Sigmoid colon (tissue), 7 donors: ENCODE measurements at regions of chr1 and their contacts with region 1.

Region 1: GRCh38 chr1:96236156-96236739 is 485.3 kb upstream of the PTBP2 start:
- DNase-seq: no peak
- H3K4me3 ChIP-seq: no peak overlapping the region
- H3K27ac ChIP-seq: peak overlapping the region in 2 of 4 donors; percentile 24 to 38
- H3K4me1 ChIP-seq: peaks cover 0 to 21% (median 13%) of the 10 kb centered on the region in 4 donors
- H3K27me3 ChIP-seq: no peaks in the 10 kb centered on the region
- CTCF ChIP-seq: peak; percentile 37 to 61 (median 49)
- EP300 ChIP-seq: no peak
- POLR2A ChIP-seq: no peak

Region 2: DNA sequence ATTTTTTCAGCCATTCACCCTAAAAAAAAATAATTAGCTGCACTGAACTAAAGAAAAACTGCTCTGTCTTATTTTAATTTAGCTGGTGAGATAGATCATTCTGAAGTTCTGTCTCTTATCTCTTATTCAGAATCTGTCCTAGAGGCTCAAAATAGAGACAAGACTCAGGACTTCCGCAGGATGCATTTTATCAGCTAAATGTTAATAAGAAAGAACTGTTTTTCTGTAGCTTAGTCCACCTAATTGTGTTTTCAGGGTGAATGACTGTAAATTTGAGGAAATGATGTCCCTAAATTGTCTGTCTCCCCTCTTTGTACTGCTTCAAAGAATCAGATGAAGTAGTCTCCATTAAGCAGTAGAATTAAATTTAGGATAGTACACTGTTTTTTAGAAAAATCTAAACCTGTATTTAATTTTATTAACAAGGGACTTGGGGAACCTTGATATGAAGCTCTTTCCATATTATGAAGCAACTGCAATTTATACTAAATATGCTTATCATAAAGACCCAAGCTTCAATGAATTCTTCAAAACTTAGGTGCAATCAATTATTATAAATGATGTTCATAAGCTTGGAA is 330.3 kb before region 1 on chr1:
- intact Hi-C with region 1: no loop called
- DNase-seq: no peak
- H3K4me3 ChIP-seq: no peak overlapping the region
- H3K27ac ChIP-seq: no peak overlapping the region
- H3K4me1 ChIP-seq: no peaks in the 10 kb centered on the region
- H3K27me3 ChIP-seq: no peaks in the 10 kb centered on the region
- CTCF ChIP-seq: no peak
- EP300 ChIP-seq: no peak
- POLR2A ChIP-seq: no peak

Region 3: DNA sequence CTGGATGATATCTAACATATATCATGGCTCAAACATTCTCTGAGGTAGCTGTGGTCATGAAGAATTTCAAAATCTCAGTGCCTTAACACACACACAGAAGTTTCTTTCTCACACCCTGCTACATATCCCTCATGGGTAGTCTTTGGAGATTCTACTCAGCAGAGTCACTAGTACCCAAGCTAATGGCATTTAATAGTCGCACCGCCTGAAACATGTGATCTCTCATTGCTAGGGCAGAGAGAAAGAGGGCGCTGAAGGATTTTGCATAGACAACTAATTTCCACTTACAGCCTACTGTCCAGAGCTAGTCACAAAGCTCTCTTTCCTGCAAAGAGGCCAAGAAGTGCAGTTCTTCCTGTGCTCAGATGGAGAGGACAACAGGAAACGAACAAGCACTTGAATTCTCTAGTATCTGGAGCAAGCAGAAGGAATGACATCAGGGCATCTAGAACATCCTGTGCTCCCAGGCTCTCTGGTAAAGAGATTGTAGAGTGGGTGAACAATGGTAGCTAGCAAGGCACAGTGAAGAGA is 301.9 kb after region 1 on chr1:
- intact Hi-C with region 1: loop called (anchors 5 kb)
- DNase-seq: peak; percentile 86
- H3K4me3 ChIP-seq: no peak overlapping the region
- H3K27ac ChIP-seq: peak overlapping the region; percentile 80 to 86 (median 82)
- H3K4me1 ChIP-seq: peaks cover 0 to 56% (median 43%) of the 10 kb centered on the region in 4 donors
- H3K27me3 ChIP-seq: no peaks in the 10 kb centered on the region
- CTCF ChIP-seq: peak in 1 of 4 experiments; percentile 16
- EP300 ChIP-seq: peak; percentile 69 to 96 (median 86)
- POLR2A ChIP-seq: no peak

Region 4: GRCh38 chr1:96721416-96722160 is 485.3 kb after region 1 on chr1 and contains the start of gene PTBP2:
- intact Hi-C with region 1: loop called (anchors 2 kb)
- DNase-seq: peak; percentile 88
- H3K4me3 ChIP-seq: peak within 1 kb of the TSS; percentile 79 to 95 (median 88)
- H3K27ac ChIP-seq: peak within 1 kb of the TSS; percentile 94 to 98 (median 95)
- H3K4me1 ChIP-seq: peaks cover 0 to 38% (median 19%) of the 10 kb centered on the region in 4 donors
- H3K27me3 ChIP-seq: no peaks in the 10 kb centered on the region
- CTCF ChIP-seq: no peak
- EP300 ChIP-seq: no peak
- POLR2A ChIP-seq: peak in 1 of 2 donors; percentile 0
- total RNA-seq, gene PTBP2: 136 to 201 (median 178) TPM

Region 5: GRCh38 chr1:96764469-96764868 is 528.2 kb after region 1 on chr1:
- intact Hi-C with region 1: loop called (anchors 10 kb)
- DNase-seq: no peak
- H3K4me3 ChIP-seq: no peak overlapping the region
- H3K27ac ChIP-seq: peak overlapping the region in 2 of 4 donors; percentile 13 to 52
- H3K4me1 ChIP-seq: peaks cover 0 to 36% (median 29%) of the 10 kb centered on the region in 4 donors
- H3K27me3 ChIP-seq: no peaks in the 10 kb centered on the region
- CTCF ChIP-seq: no peak
- EP300 ChIP-seq: no peak
- POLR2A ChIP-seq: no peak

Region 6: GRCh38 chr1:96845464-96845863 is 609.2 kb after region 1 on chr1:
- intact Hi-C with region 1: loop called (anchors 10 kb)
- DNase-seq: no peak
- H3K4me3 ChIP-seq: no peak overlapping the region
- H3K27ac ChIP-seq: no peak overlapping the region
- H3K4me1 ChIP-seq: no peaks in the 10 kb centered on the region
- H3K27me3 ChIP-seq: no peaks in the 10 kb centered on the region
- CTCF ChIP-seq: peak in 1 of 4 experiments; percentile 28
- EP300 ChIP-seq: no peak
- POLR2A ChIP-seq: no peak

Region 7: DNA sequence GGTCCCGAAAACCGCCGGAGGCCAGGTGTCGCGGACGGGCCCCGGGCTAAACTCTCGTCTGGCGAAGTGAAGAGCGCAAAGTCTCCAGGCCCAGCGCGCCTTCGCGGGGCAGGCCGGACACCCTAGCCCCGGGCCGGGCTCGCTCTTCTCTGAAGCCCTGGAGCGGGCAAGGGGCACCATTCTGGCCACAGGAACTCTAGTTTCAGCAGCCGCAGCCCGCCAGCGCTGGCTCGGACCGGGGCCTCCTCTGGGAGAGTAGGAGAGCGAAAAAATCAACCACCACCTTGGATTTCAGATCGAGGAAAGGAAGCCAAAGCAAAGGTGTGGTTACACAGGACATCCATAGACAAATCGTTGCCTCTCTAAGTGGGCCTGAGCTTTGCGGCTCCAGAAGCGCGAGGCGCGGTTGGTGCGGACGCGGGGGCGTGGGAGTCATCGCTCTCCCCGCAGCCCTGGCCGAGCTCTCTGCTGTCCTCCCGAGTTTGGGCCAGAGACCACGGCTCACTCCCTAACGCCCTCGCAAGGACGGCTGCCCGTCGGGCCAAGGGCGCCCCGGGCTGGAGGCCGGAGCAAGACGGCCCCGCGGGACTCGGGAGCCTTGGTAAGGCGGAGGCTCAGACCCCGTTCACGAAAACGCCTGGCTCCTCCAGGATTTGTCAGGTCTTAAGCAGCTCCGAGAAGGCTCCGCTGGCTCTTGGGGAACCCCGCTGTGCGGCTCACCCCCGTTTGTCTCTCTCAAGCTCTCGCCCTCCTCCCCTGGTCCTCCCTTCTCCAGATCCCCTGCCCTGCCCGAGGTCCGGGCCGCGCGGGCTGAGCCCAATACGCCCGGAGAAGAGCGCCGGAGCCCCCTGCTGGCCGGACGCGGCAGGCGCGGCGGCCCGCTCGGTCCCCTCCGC is 1817.5 kb after region 1 on chr1:
- intact Hi-C with region 1: loop called (anchors 5 kb)
- DNase-seq: peak; percentile 68
- H3K4me3 ChIP-seq: peak overlapping the region; percentile 15 to 53 (median 48)
- H3K27ac ChIP-seq: no peak overlapping the region
- H3K4me1 ChIP-seq: peaks cover 0 to 16% (median 12%) of the 10 kb centered on the region in 4 donors
- H3K27me3 ChIP-seq: peaks cover 0 to 40% (median 17%) of the 10 kb centered on the region in 3 donors
- CTCF ChIP-seq: peak; percentile 24 to 96 (median 48)
- EP300 ChIP-seq: no peak
- POLR2A ChIP-seq: no peak